ENCODE measurements at regions of chr1 and their contacts with region 1.

Region 1: GRCh38 chr1:167715157-167715999 is 6.4 kb upstream of the MPZL1 start:
- DNase-seq: peak; percentile 97
- ATAC-seq: peak; percentile 40
- H3K4me3 ChIP-seq: peak overlapping the region; percentile 95
- H3K27ac ChIP-seq: peak overlapping the region; percentile 98
- H3K4me1 ChIP-seq: peaks cover 24% of the 10 kb centered on the region
- H3K27me3 ChIP-seq: no peaks in the 10 kb centered on the region
- CTCF ChIP-seq: peak; percentile 72 to 99 (median 80)
- EP300 ChIP-seq: 0 out of 4 replicates have a peak, but pooled peaks of 1 of the 2 experiments have one; percentile 60
- POLR2A ChIP-seq: no peak
- RAD21 ChIP-seq: peak; percentile 43; the same call in 1 of the 2 replicates

Region 2: GRCh38 chr1:167584581-167584980 is 130.8 kb before region 1 on chr1:
- CTCF ChIA-PET with region 1: no interaction called
- POLR2A ChIA-PET with region 1: no interaction called
- RAD21 ChIA-PET with region 1: no interaction called
- SMC1A ChIA-PET with region 1: no interaction called
- in situ Hi-C with region 1: no loop called
- intact Hi-C with region 1: no loop called
- DNase-seq: no peak
- ATAC-seq: no peak
- H3K4me3 ChIP-seq: no peak overlapping the region
- H3K27ac ChIP-seq: no peak overlapping the region
- H3K4me1 ChIP-seq: no peaks in the 10 kb centered on the region
- H3K27me3 ChIP-seq: no peaks in the 10 kb centered on the region
- CTCF ChIP-seq: no peak
- EP300 ChIP-seq: no peak
- POLR2A ChIP-seq: no peak
- RAD21 ChIP-seq: no peak

Region 3: GRCh38 chr1:167669209-167670124 is 45.9 kb before region 1 on chr1:
- CTCF ChIA-PET with region 1: no interaction called
- POLR2A ChIA-PET with region 1: no interaction called
- RAD21 ChIA-PET with region 1: no interaction called
- SMC1A ChIA-PET with region 1: no interaction called
- in situ Hi-C with region 1: no loop called
- intact Hi-C with region 1: loop called (anchors 2 kb)
- DNase-seq: peak; percentile 66
- ATAC-seq: peak; percentile 73
- H3K4me3 ChIP-seq: no peak overlapping the region
- H3K27ac ChIP-seq: peak overlapping the region; percentile 71
- H3K4me1 ChIP-seq: peaks cover 79% of the 10 kb centered on the region
- H3K27me3 ChIP-seq: no peaks in the 10 kb centered on the region
- CTCF ChIP-seq: 0 out of 6 replicates have a peak, but pooled peaks of 1 of the 3 experiments have one; percentile 3
- EP300 ChIP-seq: no peak
- POLR2A ChIP-seq: no peak
- RAD21 ChIP-seq: no peak

Region 4: GRCh38 chr1:167752219-167752985 is 37.0 kb after region 1 on chr1:
- CTCF ChIA-PET with region 1: interaction called, 28 read pairs
- POLR2A ChIA-PET with region 1: interaction called, 6 read pairs
- RAD21 ChIA-PET with region 1: interaction called, 23 read pairs
- SMC1A ChIA-PET with region 1: interaction called, 34 read pairs
- in situ Hi-C with region 1: no loop called
- intact Hi-C with region 1: loop called (anchors 2 kb)
- DNase-seq: no peak
- ATAC-seq: peak; percentile 54
- H3K4me3 ChIP-seq: peak overlapping the region; percentile 46
- H3K27ac ChIP-seq: peak overlapping the region; percentile 88
- H3K4me1 ChIP-seq: peaks cover 11% of the 10 kb centered on the region
- H3K27me3 ChIP-seq: no peaks in the 10 kb centered on the region
- CTCF ChIP-seq: no peak
- EP300 ChIP-seq: no peak
- POLR2A ChIP-seq: no peak
- RAD21 ChIP-seq: no peak

Region 5: DNA sequence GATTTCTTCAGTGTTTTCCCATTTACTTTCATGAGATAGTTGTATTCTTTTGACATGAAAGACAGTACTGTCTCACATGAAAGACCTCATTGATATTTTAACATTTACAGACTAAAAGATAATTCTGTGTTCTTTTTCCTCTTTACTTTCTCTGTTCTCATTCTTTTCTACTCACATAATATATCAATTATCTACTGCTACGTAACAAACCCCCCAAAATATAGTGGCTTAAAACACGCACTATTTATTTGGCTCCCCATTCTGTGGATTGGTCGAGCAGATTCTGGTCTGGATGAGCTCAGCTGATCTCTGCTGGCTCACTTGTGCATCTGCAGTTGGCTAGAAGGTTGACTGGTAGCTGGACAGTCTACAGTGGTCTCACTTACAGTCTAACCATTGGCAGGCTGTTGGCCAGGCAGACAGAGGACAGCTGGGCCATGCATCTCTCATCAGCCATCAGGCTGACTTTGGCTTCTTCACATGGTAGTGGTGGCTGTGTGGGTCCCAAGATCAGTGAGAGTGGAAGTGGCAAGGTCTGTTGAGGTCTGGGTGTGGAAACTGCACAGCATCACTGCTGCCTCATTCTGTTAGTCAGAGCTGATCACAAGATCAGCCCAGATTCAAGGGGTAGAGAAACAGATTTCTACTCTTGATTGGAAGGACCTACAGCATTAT is 69.6 kb after region 1 on chr1:
- CTCF ChIA-PET with region 1: no interaction called
- POLR2A ChIA-PET with region 1: no interaction called
- RAD21 ChIA-PET with region 1: no interaction called
- SMC1A ChIA-PET with region 1: no interaction called
- in situ Hi-C with region 1: no loop called
- intact Hi-C with region 1: no loop called
- DNase-seq: no peak
- ATAC-seq: no peak
- H3K4me3 ChIP-seq: no peak overlapping the region
- H3K27ac ChIP-seq: no peak overlapping the region
- H3K4me1 ChIP-seq: no peaks in the 10 kb centered on the region
- H3K27me3 ChIP-seq: no peaks in the 10 kb centered on the region
- CTCF ChIP-seq: no peak
- EP300 ChIP-seq: no peak
- POLR2A ChIP-seq: no peak
- RAD21 ChIP-seq: no peak

Region 6: DNA sequence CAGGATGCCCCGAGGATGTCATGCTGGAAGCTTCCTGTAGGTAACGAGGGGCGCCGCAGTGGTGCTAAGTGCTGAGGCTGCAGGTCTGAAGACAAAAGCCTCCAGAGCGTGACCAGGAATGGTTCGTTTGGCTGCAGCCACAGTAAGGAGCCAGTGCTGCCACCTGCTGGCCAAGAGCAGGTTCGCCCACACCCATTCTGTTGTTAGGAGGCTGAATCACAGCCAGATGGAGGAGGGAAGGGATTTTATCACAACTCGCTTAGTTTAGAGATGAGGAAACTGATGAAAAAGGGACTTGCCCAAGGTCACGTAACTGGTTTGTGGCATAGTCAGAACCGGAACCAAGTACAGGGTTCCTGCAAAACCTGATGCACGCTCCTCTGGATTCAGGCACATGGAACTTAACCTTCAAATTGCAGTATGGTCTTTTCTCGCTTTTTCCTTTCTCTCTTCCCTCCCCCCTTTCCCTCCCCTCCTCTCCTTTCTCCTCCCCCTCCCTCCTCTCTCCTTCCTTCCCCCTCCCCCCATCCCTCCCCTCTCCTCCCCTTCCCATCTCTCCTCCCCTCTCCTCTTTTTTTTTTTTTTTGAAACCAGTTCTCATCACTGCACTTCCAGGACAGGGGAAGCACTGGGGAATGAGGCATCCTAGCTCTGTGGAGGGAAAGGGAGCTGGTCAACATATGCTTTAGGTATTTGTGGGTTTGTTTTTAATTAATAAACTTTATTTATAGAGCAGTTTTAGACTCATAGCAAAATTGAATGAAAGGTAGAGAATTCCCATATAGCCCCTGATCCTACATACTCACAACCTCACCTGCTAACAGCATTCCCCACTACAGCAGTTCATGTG is 88.2 kb after region 1 on chr1:
- CTCF ChIA-PET with region 1: interaction called, 4 read pairs
- POLR2A ChIA-PET with region 1: interaction called, 7 read pairs
- RAD21 ChIA-PET with region 1: interaction called, 3 read pairs
- SMC1A ChIA-PET with region 1: interaction called, 7 read pairs
- in situ Hi-C with region 1: no loop called
- intact Hi-C with region 1: loop called (anchors 2 kb)
- DNase-seq: peak; percentile 82
- ATAC-seq: peak; percentile 100
- H3K4me3 ChIP-seq: no peak overlapping the region
- H3K27ac ChIP-seq: no peak overlapping the region
- H3K4me1 ChIP-seq: peaks cover 12% of the 10 kb centered on the region
- H3K27me3 ChIP-seq: no peaks in the 10 kb centered on the region
- CTCF ChIP-seq: peak; percentile 95 to 100 (median 95); a peak in 5 of 6 replicates
- EP300 ChIP-seq: no peak
- POLR2A ChIP-seq: no peak
- RAD21 ChIP-seq: peak; percentile 84

Region 7: DNA sequence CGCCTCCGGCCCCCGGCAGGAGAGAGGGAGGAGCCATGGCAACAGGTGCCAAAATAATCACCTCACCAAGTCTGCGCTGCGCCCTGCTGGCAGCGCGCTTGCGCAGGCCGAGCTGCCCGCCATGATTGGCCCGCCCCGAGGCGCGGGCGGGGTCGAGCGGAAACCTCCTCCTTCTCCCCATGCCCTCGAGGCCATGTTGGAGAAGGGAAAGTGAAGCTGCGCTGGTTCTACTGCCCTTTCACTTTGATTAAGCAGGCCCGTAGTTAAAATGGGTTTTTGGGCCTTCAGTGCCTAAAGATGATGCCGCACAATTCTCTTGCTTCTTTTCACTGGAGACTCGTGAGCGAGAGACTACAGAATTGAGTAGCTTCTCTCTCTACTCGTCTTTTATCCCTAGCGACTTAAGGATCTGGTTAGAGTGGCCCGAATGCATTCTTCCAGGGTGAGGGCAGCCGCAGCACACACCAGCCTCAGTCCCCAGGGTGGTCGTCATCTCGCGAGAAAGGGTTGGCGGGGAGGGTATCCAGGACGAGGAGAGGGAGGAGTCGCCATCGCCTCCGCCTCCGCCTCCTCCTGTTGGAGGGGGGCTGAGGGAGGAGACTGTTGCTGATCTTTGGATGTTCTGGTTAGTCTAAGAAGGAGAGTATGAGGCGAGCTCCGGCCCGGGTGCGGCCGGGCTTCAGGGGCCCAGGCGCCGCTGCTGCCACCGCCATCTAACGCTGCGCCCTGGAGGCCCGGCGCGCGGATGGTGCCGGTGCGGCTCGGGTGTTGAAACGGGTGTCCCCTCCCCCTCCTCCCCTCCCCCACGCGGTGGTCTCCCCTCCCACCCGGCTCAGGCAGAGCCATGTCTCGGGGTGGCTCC is 220.9 kb after region 1 on chr1 and contains the start of gene DCAF6:
- CTCF ChIA-PET with region 1: no interaction called
- POLR2A ChIA-PET with region 1: interaction called, 5 read pairs
- RAD21 ChIA-PET with region 1: interaction called, 4 read pairs
- SMC1A ChIA-PET with region 1: interaction called, 11 read pairs
- in situ Hi-C with region 1: loop called (anchors 5 kb)
- intact Hi-C with region 1: loop called (anchors 2 kb)
- DNase-seq: peak; percentile 98
- ATAC-seq: peak; percentile 82
- H3K4me3 ChIP-seq: peak within 1 kb of the TSS; percentile 95
- H3K27ac ChIP-seq: peak within 1 kb of the TSS; percentile 99
- H3K4me1 ChIP-seq: no peaks in the 10 kb centered on the region
- H3K27me3 ChIP-seq: no peaks in the 10 kb centered on the region
- CTCF ChIP-seq: no peak
- EP300 ChIP-seq: no peak
- POLR2A ChIP-seq: peak; percentile 77
- RAD21 ChIP-seq: no peak
- polyA plus RNA-seq, gene DCAF6: 11.4 to 18.3 TPM